Activated CD8-positive, alpha-beta T cell treated with anti-CD3 and anti-CD28 coated beads for 36 hours (primary cell): ENCODE measurements at regions of chr3 and their contacts with region 1.

Region 1: DNA sequence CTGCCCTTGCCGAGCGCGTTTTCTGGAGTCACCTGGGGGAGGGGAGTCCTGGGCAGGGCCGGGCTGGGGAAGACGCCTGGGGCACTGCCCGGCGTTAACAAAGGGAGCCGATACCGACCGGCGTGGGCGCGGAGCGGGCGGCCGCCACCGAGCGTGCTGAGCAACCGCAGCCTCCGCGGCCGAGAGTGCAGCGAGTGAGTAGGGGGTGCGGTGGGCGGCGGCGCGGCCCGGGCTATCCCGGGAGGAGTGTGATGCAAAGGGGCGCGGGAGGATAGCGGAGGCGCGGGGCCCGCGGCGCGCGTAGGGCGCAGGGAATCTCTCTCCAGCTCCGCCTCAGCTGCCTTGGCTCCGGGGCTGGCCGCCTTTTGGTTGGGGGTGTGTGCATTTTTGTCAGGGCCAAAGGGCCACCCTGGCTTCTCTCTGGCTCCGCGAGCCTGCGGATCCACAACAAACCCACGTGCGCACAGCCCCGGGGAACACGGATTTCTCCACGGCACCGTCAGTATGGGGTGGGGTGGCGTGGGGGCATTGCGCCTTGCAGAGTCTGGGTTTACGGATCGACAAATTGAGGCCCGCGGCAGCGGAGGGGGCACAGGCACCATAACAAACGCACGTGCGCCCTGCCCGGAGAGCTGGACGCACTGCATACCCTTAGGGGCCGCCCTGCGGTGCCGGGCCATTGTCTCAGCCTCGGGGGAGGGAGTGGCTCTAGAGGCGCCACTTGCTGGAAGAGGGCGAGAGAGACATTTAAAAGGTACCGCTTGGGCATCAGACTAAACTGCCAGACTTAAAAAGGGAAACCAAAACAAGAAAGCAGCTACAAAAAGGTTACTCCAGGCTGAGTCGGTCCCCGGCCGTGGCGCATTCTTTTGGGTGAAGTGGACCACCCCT is 560 bp downstream of the ST6GAL1 start:
- DNase-seq: peak; percentile 73
- ATAC-seq: peak; percentile 77
- H3K4me3 Mint-ChIP-seq: peak overlapping the region; percentile 97
- H3K27ac Mint-ChIP-seq: peak overlapping the region; percentile 93
- H3K4me1 Mint-ChIP-seq: peaks cover 30% of the 10 kb centered on the region
- H3K27me3 Mint-ChIP-seq: no peaks in the 10 kb centered on the region
- CTCF ChIP-seq: no peak

Region 2: GRCh38 chr3:186854954-186855353 is 75.9 kb before region 1 on chr3:
- CTCF ChIA-PET with region 1: interaction called, 33 read pairs
- POLR2A ChIA-PET with region 1: interaction called, 12 read pairs
- intact Hi-C with region 1: no loop called
- DNase-seq: no peak
- ATAC-seq: no peak
- H3K4me3 Mint-ChIP-seq: no peak overlapping the region
- H3K27ac Mint-ChIP-seq: no peak overlapping the region
- H3K4me1 Mint-ChIP-seq: peaks cover 8% of the 10 kb centered on the region
- H3K27me3 Mint-ChIP-seq: no peaks in the 10 kb centered on the region
- CTCF ChIP-seq: no peak

Region 3: DNA sequence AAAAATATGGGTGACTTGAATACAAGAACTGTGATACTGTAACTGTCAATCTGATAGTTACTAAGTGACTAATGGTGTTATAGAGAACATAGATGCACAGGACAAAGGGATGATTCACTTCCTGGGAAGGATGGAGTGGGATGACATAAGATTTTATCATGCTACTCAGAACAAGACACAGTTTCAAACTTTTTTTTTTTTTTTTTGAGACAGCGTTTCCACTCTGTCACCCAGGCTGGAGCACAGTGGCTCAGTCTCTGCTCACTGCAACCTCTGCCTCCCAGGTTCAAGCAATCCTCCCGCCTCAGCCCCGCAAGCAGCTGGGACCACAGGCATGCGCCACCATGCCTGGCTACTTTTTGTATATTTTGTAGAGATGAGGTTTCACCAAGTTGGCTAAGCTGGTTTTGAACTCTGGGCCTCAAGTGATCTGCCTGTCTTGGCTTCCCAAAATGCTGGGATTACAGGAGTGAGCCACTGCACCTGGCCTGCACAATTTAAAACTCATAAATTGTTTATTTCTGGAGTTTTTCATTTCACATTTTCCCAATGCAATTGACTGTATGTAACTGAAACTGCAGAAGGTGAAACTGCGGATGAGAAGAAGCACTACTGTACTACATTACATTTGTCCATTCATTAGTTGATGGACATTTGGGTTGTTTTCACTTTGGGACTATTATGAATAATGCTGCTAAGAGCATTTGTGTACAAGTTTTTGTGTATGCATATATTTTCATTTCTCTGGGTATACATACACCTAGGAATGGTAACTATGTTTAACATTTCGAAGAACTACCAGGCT is 47.8 kb before region 1 on chr3:
- CTCF ChIA-PET with region 1: interaction called, 16 read pairs
- POLR2A ChIA-PET with region 1: interaction called, 5 read pairs
- intact Hi-C with region 1: loop called (anchors 2 kb)
- DNase-seq: peak; percentile 69
- ATAC-seq: peak; percentile 95
- H3K4me3 Mint-ChIP-seq: peak overlapping the region; percentile 38
- H3K27ac Mint-ChIP-seq: peak overlapping the region; percentile 88
- H3K4me1 Mint-ChIP-seq: peaks cover 48% of the 10 kb centered on the region
- H3K27me3 Mint-ChIP-seq: no peaks in the 10 kb centered on the region
- CTCF ChIP-seq: no peak

Region 4: GRCh38 chr3:186973702-186974101 is 42.8 kb after region 1 on chr3:
- CTCF ChIA-PET with region 1: no interaction called
- POLR2A ChIA-PET with region 1: no interaction called
- intact Hi-C with region 1: no loop called
- DNase-seq: no peak
- ATAC-seq: no peak
- H3K4me3 Mint-ChIP-seq: no peak overlapping the region
- H3K27ac Mint-ChIP-seq: no peak overlapping the region
- H3K4me1 Mint-ChIP-seq: peaks cover 31% of the 10 kb centered on the region
- H3K27me3 Mint-ChIP-seq: no peaks in the 10 kb centered on the region
- CTCF ChIP-seq: no peak